Naive thymus-derived CD4-positive, alpha-beta T cell (primary cell): ENCODE measurements at regions of chr3 and their contacts with region 1.

Region 1: DNA sequence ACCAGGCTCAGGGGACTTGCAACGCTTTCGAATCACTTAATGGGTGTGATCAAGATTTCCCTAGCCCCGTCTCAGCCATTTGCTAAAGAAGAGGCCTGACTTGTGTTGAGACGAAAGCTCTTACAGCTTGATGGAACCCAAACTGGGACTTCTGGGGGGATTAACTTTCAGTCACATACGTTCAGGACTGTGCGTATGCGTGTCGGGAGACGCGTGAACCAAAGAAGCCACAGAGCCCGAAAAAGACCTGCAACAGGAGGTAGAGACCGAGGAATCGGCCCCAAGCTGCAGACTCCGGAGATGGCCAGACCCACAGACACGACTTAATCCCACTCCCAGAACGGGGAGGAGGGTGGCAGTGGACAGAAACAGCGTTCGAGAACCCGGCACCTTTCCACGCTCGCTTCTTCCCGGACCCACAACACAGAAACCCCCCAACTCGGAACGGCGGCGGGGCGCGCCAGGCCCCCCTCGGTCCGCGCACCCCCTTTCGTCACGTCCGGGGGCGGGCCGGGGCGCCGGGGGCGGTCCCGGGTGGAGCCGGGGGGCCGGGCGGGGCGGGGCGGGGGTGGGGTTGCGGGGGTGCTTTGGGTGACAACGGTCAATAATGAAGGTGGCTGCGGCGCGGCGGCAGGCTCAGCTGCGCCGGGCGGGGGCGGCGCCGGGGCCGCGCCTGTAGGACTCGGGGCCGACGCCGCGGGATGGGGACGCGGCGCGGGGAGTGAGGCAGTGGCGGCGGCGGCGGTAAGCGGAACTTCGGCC is at the start of gene ATP11B:
- DNase-seq: peak; percentile 72 to 90 (median 83)
- ATAC-seq: peak; percentile 92
- H3K4me3 ChIP-seq: peak within 1 kb of the TSS; percentile 98
- H3K4me3 Mint-ChIP-seq: peak within 1 kb of the TSS; percentile 97 to 100 (median 100)
- H3K27ac ChIP-seq: peak within 1 kb of the TSS; percentile 97
- H3K27ac Mint-ChIP-seq: peak within 1 kb of the TSS; percentile 96 to 100 (median 100)
- H3K4me1 ChIP-seq: peaks cover 21 to 22% of the 10 kb centered on the region in 2 donors
- H3K4me1 Mint-ChIP-seq: peaks cover 20 to 43% (median 28%) of the 10 kb centered on the region in 7 donors
- H3K27me3 ChIP-seq: no peaks in the 10 kb centered on the region
- H3K27me3 Mint-ChIP-seq: no peaks in the 10 kb centered on the region
- total RNA-seq, gene ATP11B: 111 to 136 (median 114) TPM

Region 2: GRCh38 chr3:180989291-180990163 is 1803.6 kb before region 1 on chr3 and contains the start of gene DNAJC19:
- CTCF ChIA-PET with region 1: no interaction called
- POLR2A ChIA-PET with region 1: no interaction called
- intact Hi-C with region 1: loop called (anchors 2 to 10 kb)
- DNase-seq: peak; percentile 69 to 94 (median 93)
- ATAC-seq: peak; percentile 99
- H3K4me3 ChIP-seq: peak within 1 kb of the TSS; percentile 78
- H3K4me3 Mint-ChIP-seq: peak within 1 kb of the TSS; percentile 91 to 99 (median 97)
- H3K27ac ChIP-seq: peak within 1 kb of the TSS; percentile 80
- H3K27ac Mint-ChIP-seq: peak within 1 kb of the TSS; percentile 90 to 99 (median 96)
- H3K4me1 ChIP-seq: peaks cover 15 to 23% of the 10 kb centered on the region in 2 donors
- H3K4me1 Mint-ChIP-seq: peaks cover 15 to 58% (median 44%) of the 10 kb centered on the region in 7 donors
- H3K27me3 ChIP-seq: no peaks in the 10 kb centered on the region
- H3K27me3 Mint-ChIP-seq: peaks cover 0 to 7% (median 0%) of the 10 kb centered on the region in 5 donors
- total RNA-seq, gene DNAJC19: 20.7 to 74.1 (median 40.2) TPM

Region 3: DNA sequence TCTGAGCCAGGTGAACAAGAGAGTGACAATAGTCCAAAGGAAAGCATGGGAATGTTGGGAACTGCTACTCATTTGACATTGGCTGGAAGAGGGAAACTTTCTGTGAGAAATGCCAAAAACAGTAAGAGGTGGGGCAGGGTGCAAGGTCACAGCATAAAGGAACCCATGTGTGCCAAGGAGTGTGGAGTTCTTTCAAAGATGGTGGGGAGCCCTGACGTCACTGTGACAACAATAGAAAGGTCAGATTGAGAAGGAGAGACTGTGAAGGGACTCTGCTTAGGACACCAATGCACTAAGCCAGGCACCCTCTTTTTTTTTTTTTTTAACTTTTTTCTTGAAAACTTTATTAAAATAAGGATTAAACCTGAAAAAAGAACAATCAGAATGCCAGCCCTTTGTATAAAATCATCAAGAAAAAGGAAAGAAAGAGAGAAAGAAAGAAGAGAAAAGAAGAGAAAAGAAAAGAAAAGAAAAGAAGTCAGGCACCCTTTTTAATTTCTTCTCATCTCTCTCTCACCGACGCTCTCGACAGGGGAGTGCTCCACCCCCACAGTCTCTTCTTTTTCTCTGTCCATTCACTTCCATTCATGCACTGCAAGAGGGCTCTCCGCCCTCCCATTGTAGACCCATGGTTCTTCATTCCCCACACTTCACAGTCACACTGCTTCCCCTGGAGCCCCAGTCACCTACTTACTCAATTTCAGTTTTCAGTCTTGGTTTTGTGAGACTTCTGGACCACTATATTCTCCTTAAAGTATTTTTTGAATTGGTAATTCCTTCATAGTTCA is 826.9 kb before region 1 on chr3:
- CTCF ChIA-PET with region 1: no interaction called
- POLR2A ChIA-PET with region 1: no interaction called
- intact Hi-C with region 1: no loop called
- DNase-seq: no peak
- ATAC-seq: no peak
- H3K4me3 ChIP-seq: no peak overlapping the region
- H3K4me3 Mint-ChIP-seq: no peak overlapping the region
- H3K27ac ChIP-seq: no peak overlapping the region
- H3K27ac Mint-ChIP-seq: no peak overlapping the region
- H3K4me1 ChIP-seq: no peaks in the 10 kb centered on the region
- H3K4me1 Mint-ChIP-seq: no peaks in the 10 kb centered on the region
- H3K27me3 ChIP-seq: no peaks in the 10 kb centered on the region
- H3K27me3 Mint-ChIP-seq: peaks cover 0 to 13% (median 0%) of the 10 kb centered on the region in 5 donors

Region 4: GRCh38 chr3:182816181-182816580 is 23.1 kb after region 1 on chr3:
- CTCF ChIA-PET with region 1: no interaction called
- POLR2A ChIA-PET with region 1: interaction called, 8 read pairs
- intact Hi-C with region 1: loop called in 1 of 2 experiments (anchors 2 kb)
- DNase-seq: no peak
- ATAC-seq: no peak
- H3K4me3 ChIP-seq: no peak overlapping the region
- H3K4me3 Mint-ChIP-seq: peak overlapping the region in 5 of 10 donors; percentile 10 to 55 (median 29)
- H3K27ac ChIP-seq: no peak overlapping the region
- H3K27ac Mint-ChIP-seq: peak overlapping the region in 5 of 9 donors; percentile 30 to 67 (median 34)
- H3K4me1 ChIP-seq: peaks cover 6 to 13% of the 10 kb centered on the region in 2 donors
- H3K4me1 Mint-ChIP-seq: peaks cover 36 to 86% (median 68%) of the 10 kb centered on the region in 7 donors
- H3K27me3 ChIP-seq: no peaks in the 10 kb centered on the region
- H3K27me3 Mint-ChIP-seq: no peaks in the 10 kb centered on the region

Region 5: DNA sequence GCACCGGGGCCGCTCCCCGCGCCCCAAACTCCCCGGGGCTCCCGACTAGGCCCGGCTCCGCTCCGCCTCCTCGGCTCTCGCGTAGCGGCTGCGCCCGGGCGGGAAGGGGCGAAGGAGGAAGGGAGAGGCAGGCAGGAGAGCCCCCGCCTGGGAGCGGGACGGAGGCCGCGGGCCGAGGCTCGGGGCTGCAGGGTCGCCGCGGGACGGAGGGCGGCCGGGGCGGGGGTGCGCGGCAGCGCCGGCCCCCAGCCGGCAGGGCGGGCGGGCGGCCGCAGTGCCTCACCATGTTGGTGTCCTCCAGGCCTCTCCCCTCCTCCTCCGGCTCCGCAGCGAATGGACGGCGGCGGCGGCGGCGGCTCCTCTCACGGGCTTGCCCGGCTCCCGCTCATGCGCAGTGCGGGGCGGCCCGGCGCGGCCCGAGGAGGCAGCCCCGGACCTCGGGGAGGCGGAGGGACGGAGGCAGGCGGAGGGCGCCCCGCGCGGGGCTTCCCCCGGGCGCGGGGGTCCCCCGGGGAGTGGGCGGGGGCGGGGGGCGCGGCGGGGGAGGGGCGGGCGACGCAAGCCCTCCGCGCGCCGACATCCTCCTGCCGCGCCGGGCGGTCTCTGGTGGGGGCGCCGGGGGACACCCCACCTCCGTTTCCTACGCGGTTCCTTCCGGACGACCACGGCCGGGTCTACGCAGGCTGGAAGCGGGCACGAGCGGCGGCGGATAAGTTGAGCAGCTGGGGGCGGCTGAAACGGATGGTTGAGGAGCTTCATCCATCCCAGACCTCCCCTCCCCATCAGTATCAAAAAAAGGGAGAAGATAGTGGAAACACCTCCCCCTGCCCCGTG is 187.3 kb after region 1 on chr3 and contains the start of gene DCUN1D1:
- CTCF ChIA-PET with region 1: no interaction called
- POLR2A ChIA-PET with region 1: no interaction called
- intact Hi-C with region 1: loop called (anchors 2 kb)
- DNase-seq: peak; percentile 77 to 95 (median 85)
- ATAC-seq: peak; percentile 94
- H3K4me3 ChIP-seq: peak within 1 kb of the TSS; percentile 75
- H3K4me3 Mint-ChIP-seq: peak within 1 kb of the TSS in 9 of 10 donors; percentile 87 to 97 (median 91)
- H3K27ac ChIP-seq: peak within 1 kb of the TSS; percentile 79
- H3K27ac Mint-ChIP-seq: peak within 1 kb of the TSS; percentile 73 to 95 (median 91)
- H3K4me1 ChIP-seq: peaks cover 18 to 20% of the 10 kb centered on the region in 2 donors
- H3K4me1 Mint-ChIP-seq: peaks cover 14 to 46% (median 42%) of the 10 kb centered on the region in 7 donors
- H3K27me3 ChIP-seq: no peaks in the 10 kb centered on the region
- H3K27me3 Mint-ChIP-seq: no peaks in the 10 kb centered on the region
- total RNA-seq, gene DCUN1D1: 23.7 to 53.0 (median 34.0) TPM

Region 6: DNA sequence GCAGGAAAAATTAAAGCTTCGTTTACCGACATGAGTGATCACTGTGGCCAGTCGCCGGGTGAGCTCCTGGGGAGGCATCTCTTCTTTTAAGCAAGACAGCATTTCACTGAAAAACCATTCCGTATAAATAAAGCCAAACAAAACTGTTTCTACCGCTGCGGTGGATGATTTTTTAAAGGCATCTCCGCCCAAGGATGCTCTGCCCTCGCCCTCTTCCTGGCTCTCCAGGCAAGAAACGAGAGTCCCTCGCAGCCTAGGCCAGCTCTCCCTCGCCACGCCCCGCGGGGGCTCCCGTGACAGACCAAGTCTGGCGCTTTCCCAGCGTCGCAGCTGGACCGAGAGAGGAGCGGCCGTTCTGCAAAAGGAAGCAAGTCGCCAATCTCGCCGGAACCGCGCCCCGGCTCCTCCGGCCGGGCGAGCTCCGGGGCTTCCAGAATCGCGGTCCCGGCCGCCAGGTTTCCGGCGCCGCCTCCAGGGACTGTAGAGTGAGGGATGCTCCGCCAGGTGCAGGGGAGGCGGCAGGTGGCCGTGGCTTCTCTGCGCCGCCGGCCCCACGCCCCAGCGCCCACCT is 634.9 kb after region 1 on chr3:
- CTCF ChIA-PET with region 1: no interaction called
- POLR2A ChIA-PET with region 1: no interaction called
- intact Hi-C with region 1: loop called in 1 of 2 experiments (anchors 10 kb)
- DNase-seq: peak in 5 of 9 donors; percentile 3 to 55 (median 4)
- ATAC-seq: peak; percentile 34
- H3K4me3 ChIP-seq: peak overlapping the region; percentile 77
- H3K4me3 Mint-ChIP-seq: peak overlapping the region; percentile 66 to 90 (median 80)
- H3K27ac ChIP-seq: no peak overlapping the region
- H3K27ac Mint-ChIP-seq: peak overlapping the region in 2 of 9 donors; percentile 20 to 61
- H3K4me1 ChIP-seq: peaks cover 0 to 8% of the 10 kb centered on the region in 2 donors
- H3K4me1 Mint-ChIP-seq: peaks cover 0 to 28% (median 5%) of the 10 kb centered on the region in 7 donors
- H3K27me3 ChIP-seq: no peaks in the 10 kb centered on the region
- H3K27me3 Mint-ChIP-seq: peaks cover 0 to 29% (median 2%) of the 10 kb centered on the region in 5 donors

Region 7: DNA sequence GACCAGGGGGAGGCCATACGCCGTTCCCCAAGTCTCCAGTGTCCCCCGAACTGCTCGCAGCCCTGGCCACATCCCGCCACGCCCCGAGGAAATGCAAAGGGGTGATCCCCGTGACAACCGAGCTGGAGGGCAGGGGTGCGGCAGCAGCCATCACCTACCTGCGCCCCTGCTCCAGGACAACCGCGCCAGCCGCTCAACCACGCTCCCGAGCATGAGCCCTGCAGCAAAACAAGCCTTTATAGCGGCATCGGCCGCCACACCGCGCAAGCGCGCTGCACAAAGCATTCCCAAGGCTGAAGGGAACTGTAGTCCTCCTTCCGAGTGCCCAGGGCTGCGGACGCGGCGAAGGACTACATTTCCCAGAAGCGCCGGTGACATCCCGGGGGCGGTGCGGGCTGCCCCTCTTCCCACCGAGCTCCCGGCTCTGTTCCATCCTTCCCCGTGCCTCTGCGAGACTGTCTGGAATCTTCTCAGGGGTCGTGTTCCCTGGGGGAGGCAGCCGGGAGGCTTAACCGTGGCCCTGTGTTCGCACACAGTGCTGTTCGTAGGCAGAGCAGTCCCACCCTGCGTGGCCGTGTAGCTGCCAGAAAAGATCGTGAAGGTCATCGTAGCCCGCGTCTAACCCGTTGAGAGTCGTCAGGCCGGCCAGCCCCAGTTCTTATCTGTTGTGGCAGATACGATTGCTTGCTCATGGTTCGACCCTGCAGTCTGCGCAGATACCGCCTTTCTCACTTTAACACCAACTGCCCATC is 1224.8 kb after region 1 on chr3 and contains the start of gene ABCC5:
- CTCF ChIA-PET with region 1: no interaction called
- POLR2A ChIA-PET with region 1: no interaction called
- intact Hi-C with region 1: loop called in 1 of 2 experiments (anchors 10 kb)
- DNase-seq: peak; percentile 62 to 84 (median 79)
- ATAC-seq: peak; percentile 96
- H3K4me3 ChIP-seq: peak within 1 kb of the TSS; percentile 100
- H3K4me3 Mint-ChIP-seq: peak within 1 kb of the TSS; percentile 96 to 100 (median 99)
- H3K27ac ChIP-seq: peak within 1 kb of the TSS; percentile 72
- H3K27ac Mint-ChIP-seq: peak within 1 kb of the TSS; percentile 70 to 95 (median 91)
- H3K4me1 ChIP-seq: peaks cover 8 to 14% of the 10 kb centered on the region in 2 donors
- H3K4me1 Mint-ChIP-seq: peaks cover 11 to 33% (median 25%) of the 10 kb centered on the region in 7 donors
- H3K27me3 ChIP-seq: no peaks in the 10 kb centered on the region
- H3K27me3 Mint-ChIP-seq: peaks cover 5 to 15% (median 9%) of the 10 kb centered on the region in 5 donors
- total RNA-seq, gene ABCC5: 15.6 to 50.4 (median 25.5) TPM